ENCODE measurements at regions of chr11 and their contacts with region 1.

Region 1: GRCh38 chr11:32435511-32435941 is at the start of gene WT1:
- DNase-seq: no peak
- H3K4me3 Mint-ChIP-seq: peak within 1 kb of the TSS; percentile 40
- H3K27ac Mint-ChIP-seq: peak within 1 kb of the TSS; percentile 67
- H3K4me1 Mint-ChIP-seq: peaks cover 8% of the 10 kb centered on the region
- H3K27me3 Mint-ChIP-seq: peaks cover 79% of the 10 kb centered on the region
- total RNA-seq, gene WT1: not detected in 2 replicates

Region 2: DNA sequence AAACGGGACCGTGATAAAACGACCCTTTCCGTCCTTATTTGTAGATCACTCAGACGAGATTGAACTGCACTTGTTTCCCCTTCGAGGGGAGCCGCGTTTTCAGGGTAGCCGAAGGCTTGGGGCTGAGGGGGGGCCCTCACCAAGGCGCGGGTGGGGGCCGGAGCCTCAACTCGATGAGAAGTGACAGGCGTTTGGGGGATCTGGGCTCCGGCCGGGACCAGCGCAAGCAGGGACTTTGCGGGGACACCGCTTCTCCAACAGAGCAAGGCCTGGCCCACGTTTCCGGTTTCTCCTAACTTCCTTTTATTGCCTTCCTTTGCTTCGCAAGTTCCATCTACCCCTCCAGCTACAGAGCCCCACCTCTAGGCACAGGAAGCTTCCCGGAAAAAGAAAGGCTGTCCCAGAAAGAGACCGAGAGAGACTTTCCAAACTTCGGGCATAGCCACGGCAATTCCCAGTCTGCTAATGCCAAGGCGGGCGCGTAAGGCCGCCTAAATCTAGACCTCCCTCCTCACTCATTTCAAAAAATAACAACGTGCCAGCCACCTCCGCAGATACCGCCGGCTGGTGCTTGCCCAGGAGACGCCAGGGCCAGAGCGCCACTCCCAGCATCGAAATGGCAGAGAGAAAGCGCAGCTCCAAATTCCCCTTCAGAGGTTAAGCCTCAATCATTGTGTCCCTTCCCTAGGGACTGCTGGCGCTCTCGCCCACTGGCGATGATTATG is 631.1 kb before region 1 on chr11:
- intact Hi-C with region 1: loop called (anchors 5 kb)
- DNase-seq: peak; percentile 65
- H3K4me3 Mint-ChIP-seq: peak overlapping the region; percentile 34
- H3K27ac Mint-ChIP-seq: peak overlapping the region; percentile 79
- H3K4me1 Mint-ChIP-seq: peaks cover 13% of the 10 kb centered on the region
- H3K27me3 Mint-ChIP-seq: peaks cover 87% of the 10 kb centered on the region

Region 3: DNA sequence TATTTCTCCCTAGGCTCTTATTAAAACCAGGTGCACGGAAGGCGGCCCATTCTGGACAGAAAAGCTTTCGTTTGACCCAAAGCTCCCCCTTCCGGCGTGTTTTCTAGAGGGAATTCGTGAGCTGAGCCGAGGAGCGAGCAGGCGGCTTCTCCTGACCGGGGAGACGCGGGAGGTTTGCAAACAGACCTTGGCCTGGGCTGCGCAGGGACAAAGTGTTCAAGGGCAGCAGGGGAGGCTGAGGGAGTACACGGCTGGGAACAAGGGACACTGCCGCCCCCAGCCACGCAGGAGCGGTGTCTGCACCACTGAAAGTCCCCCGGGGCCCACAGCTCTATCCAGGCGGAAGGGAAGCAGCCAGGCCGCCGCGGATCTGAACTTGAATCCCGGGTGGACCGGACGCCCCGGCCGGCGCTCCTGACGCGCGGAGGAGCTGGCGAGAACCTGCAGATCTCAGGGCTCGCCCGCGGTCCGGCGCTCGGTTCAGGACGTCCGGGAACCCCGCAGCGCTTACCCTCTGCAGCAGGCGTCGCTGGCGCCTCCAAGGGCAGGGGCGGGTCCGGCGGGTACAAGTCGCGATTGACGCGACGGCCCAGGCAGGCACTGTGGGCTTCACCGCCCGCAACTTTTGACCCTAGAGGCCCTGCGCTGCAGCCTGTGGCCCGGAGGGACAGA is 102.1 kb before region 1 on chr11:
- intact Hi-C with region 1: loop called (anchors 5 kb)
- DNase-seq: peak; percentile 73
- H3K4me3 Mint-ChIP-seq: peak overlapping the region; percentile 73
- H3K27ac Mint-ChIP-seq: no peak overlapping the region
- H3K4me1 Mint-ChIP-seq: peaks cover 13% of the 10 kb centered on the region
- H3K27me3 Mint-ChIP-seq: peaks cover 34% of the 10 kb centered on the region

Region 4: DNA sequence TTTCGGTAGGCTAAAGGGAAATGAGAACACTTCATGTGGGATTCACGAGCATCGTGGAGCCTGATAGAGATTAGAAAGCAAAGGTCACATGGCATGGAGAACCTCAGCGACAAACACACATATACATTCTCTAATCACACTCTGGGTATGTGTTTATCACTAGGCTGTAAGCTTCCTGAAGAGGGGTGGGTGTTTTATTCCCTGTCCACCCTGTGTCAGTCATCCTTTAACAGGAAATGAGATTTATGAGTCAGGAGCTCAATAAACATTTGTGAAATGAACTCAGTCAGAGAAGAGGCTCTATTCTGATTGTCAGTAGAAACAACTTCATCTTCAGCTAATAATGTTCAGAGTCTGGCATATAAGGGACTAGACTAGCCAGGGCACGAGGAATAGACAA is 76.4 kb after region 1 on chr11:
- intact Hi-C with region 1: no loop called
- DNase-seq: no peak
- H3K4me3 Mint-ChIP-seq: no peak overlapping the region
- H3K27ac Mint-ChIP-seq: no peak overlapping the region
- H3K4me1 Mint-ChIP-seq: no peaks in the 10 kb centered on the region
- H3K27me3 Mint-ChIP-seq: peaks cover 2% of the 10 kb centered on the region